ENCODE measurements at regions of chr19 and their contacts with region 1.

Region 1: GRCh38 chr19:47779524-47780214 is 1.2 kb downstream of the SELENOW start:
- DNase-seq: peak; percentile 74
- ATAC-seq: peak; percentile 48 to 50

Region 2: GRCh38 chr19:47707135-47707925 is 72.3 kb before region 1 on chr19:
- intact Hi-C with region 1: loop called in 1 of 2 experiments (anchors 5 kb)
- DNase-seq: peak; percentile 75
- ATAC-seq: peak; percentile 85 to 87

Measured in left cardiac atrium (tissue), 4 donors.